Activated naive CD4-positive, alpha-beta T cell treated with anti-CD3 and anti-CD28 coated beads for 36 hours (primary cell): ENCODE measurements at regions of chr4 and their contacts with region 1.

Region 1: DNA sequence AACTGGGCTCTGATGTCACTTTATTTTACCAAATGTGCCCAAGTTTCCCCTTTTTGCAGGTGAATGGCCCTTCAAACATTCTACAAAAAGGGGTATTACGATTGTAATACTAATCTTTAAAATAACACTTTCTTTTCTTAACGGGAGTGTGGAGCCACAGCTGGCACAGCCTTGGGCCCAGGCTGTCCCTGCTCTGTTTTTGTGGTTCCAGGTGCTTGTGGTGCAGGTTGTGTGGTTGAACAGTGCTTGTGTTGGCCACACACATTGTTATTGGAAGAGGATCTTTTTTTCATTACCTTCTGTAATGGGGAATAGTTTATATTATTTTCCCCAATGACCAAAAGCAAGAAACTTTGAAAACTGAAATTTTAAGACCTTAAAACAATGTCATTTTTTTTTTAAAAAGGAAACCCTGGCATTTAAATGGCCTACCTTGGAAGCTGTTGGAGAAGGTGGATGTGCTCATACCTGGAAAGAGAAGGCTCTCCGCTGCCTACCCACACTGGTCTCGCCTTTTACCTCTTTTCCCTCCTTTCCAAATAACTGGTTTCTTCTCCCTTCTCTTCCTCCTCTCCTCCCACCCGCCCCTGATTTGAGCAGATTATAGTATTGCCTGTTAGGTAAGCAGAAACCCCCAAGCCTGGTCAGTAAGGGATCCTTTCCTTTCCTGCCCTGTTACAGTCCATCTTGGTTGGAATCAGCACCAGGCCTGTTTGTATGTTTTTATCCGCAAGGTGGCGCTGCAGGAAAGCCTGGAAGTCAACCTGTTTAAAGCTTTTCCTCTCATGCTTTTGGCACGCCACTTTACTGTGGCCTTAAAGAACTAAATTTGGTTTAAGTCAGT is 28.6 kb downstream of the HADH start:
- DNase-seq: peak; percentile 95
- H3K4me3 Mint-ChIP-seq: no peak overlapping the region
- H3K27ac Mint-ChIP-seq: no peak overlapping the region
- H3K4me1 Mint-ChIP-seq: peaks cover 13% of the 10 kb centered on the region
- H3K27me3 Mint-ChIP-seq: no peaks in the 10 kb centered on the region

Region 2: DNA sequence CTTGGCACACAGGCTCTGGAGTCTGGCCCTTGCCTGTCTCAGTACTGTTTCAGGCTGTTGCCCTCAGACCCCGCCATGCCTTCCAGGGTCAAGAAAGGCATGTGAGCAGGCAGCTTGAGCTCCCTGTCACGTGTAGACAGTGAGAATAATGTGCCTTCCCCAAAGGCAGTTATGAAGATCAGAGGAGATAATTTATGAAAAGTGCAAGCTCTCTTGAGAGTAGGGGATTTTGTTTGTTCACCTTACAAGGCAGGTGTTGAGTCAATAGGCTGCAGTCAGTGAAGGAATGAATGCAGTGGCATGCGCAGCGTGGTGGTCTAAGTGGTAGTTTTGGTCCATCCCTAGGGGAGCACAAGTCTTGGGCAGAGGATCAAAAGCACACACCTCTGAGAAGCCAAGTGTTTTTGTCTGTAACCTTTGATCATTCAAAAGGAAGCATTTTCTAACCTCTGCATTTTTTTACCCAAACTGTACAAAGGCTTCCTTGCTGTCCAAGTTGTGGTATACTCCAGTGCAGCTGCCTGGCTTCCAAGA is 14.2 kb before region 1 on chr4:
- CTCF ChIA-PET with region 1: interaction called, 10 read pairs
- intact Hi-C with region 1: no loop called
- DNase-seq: peak; percentile 36
- H3K4me3 Mint-ChIP-seq: no peak overlapping the region
- H3K27ac Mint-ChIP-seq: no peak overlapping the region
- H3K4me1 Mint-ChIP-seq: peaks cover 52% of the 10 kb centered on the region
- H3K27me3 Mint-ChIP-seq: no peaks in the 10 kb centered on the region

Region 3: GRCh38 chr4:108492816-108493595 is 474.7 kb after region 1 on chr4:
- CTCF ChIA-PET with region 1: interaction called, 15 read pairs
- intact Hi-C with region 1: loop called (anchors 1 kb)
- DNase-seq: peak; percentile 53
- H3K4me3 Mint-ChIP-seq: no peak overlapping the region
- H3K27ac Mint-ChIP-seq: no peak overlapping the region
- H3K4me1 Mint-ChIP-seq: no peaks in the 10 kb centered on the region
- H3K27me3 Mint-ChIP-seq: no peaks in the 10 kb centered on the region

Region 4: DNA sequence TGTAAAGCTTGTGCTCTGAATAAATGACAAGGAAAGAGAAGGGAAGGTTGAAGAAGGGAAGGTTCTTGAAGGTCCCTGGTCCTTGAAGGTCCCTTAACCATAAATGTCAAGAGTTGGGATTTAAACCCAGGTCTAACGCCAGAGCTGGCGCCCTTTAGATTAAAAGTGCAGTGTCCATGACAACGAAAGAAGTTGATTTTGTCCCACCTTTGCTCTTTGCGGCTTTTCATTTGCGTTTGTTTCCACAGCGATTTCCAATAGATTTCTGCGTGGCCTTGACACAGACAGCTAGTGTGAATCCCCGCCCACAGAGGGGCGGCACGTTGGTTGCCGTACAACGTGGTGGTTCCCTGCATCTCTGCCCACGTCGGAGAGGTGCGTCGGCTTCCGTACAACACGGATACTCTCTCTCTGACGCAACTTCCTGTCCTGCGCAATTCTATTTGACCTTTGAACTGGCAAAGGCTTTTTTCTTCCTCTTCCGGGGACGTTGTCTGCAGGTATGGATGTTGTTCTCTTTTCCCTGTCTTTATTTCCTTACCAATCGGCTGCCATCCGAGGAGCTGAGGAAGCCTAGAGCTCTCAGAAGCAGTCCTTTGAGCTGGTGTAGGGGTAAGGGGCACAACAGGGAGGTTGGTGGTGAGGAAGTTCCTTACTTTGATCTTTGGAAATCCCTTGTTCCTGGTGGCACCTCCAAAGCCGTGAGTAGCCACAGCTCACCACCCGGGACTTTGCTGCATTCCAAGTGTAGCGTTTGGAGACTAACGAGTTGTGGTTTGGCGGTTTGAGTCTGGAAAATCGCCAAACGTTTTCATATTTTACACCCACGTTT is 602.1 kb after region 1 on chr4 and contains the start of gene RPL34:
- CTCF ChIA-PET with region 1: interaction called, 10 read pairs
- intact Hi-C with region 1: no loop called
- DNase-seq: peak; percentile 99
- H3K4me3 Mint-ChIP-seq: peak within 1 kb of the TSS; percentile 93
- H3K27ac Mint-ChIP-seq: peak within 1 kb of the TSS; percentile 95
- H3K4me1 Mint-ChIP-seq: peaks cover 45% of the 10 kb centered on the region
- H3K27me3 Mint-ChIP-seq: no peaks in the 10 kb centered on the region
- total RNA-seq, gene RPL34: 1,983 to 2,004 TPM

Region 5: DNA sequence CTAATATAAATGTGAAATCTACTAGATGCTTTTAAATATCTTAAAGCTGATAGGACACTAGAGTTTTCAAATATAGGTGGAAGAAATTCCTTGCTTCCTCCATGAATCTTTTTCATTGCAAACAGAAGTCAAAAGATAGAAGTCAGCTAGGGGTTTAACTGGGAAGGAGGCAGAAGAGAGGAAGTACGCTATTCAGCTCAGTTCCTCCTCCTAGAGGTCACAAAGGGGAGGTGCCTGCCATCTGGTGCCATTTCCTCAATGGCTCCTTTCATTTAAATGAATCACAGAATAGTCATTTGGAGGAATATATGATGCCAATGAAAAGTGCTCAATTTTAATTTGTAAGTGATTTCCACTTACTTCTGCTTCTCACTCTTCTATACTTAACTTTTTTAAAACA is 1275.7 kb after region 1 on chr4:
- CTCF ChIA-PET with region 1: no interaction called
- intact Hi-C with region 1: loop called (anchors 10 kb)
- DNase-seq: peak; percentile 58
- H3K4me3 Mint-ChIP-seq: no peak overlapping the region
- H3K27ac Mint-ChIP-seq: no peak overlapping the region
- H3K4me1 Mint-ChIP-seq: no peaks in the 10 kb centered on the region
- H3K27me3 Mint-ChIP-seq: peaks cover 12% of the 10 kb centered on the region